ENCODE measurements at regions of chr4 and their contacts with region 1.

Region 1: DNA sequence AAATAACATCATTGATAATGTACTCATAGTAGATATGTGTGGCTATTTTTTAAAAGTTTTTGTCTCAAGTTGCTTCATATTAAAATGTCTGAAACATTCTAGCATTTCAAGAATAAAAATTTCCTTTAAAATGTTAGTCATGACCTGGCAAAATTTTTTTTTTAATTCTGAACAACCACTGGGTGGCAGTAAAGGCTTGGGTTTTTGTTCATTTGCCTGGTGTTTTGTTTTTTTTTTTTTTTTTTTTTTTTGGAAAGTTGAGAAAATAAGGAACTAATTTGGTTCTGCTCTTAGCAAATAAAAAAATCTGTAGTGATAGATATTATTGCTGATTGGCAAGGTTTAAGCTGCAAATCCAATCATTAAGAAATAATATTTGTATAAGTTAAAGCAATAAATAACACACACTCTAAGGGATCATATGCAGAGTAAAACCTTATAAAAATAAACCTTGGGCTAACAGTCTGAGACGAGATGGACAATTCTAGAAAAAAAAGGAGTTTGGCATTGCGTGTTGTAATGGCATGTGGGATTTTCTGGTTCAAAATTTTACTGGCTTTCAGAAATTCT is 81.4 kb downstream of the CEP44 start:
- DNase-seq: no peak
- ATAC-seq: no peak
- H3K4me3 ChIP-seq: no peak overlapping the region
- H3K27ac ChIP-seq: no peak overlapping the region
- H3K4me1 ChIP-seq: no peaks in the 10 kb centered on the region
- H3K27me3 ChIP-seq: no peaks in the 10 kb centered on the region
- CTCF ChIP-seq: peak; percentile 54

Region 2: GRCh38 chr4:174340714-174341113 is 24.4 kb before region 1 on chr4:
- intact Hi-C with region 1: no loop called
- DNase-seq: no peak
- ATAC-seq: no peak
- H3K4me3 ChIP-seq: no peak overlapping the region
- H3K27ac ChIP-seq: no peak overlapping the region
- H3K4me1 ChIP-seq: no peaks in the 10 kb centered on the region
- H3K27me3 ChIP-seq: no peaks in the 10 kb centered on the region
- CTCF ChIP-seq: no peak

Region 3: DNA sequence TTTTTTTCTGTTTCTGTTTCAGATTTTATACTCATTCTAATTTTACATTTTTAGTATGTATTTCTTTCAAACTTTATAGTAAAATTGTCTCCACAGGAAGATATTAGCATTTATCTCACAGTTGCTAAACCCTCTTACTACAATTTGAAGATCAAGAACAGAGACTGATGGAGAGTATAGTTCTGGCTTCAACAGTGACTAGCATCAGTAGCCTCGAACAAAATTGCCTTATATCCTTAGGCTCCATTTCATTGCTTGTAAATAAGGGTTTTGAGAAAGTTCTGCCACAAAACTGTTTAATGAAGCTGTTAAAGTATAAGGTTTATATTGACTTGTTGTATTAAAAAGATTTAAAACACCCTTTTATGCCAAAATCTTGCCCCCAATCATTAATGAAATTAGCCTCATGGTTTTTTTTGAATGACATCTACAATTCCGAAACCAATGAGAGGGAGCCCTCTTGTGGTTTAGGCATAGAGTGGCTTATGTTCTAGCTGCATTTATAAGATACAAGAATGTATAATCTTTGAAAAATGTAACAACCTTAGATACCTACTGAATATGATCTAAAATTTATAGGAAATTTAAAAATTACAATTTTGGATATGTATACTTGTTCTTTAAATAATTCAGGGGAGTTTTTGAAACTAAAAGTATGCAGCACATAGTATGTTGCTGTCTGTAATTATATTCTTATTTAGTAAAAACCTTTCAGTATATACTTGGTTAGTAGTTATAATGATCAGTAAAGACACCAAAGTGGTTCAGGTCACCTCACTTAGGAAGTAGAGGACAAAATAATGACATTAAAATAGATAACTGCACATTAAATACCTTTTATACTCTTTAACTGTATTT is 267.0 kb after region 1 on chr4:
- intact Hi-C with region 1: loop called (anchors 2 kb)
- DNase-seq: no peak
- ATAC-seq: peak in 1 of 4 donors; percentile 74
- H3K4me3 ChIP-seq: no peak overlapping the region
- H3K27ac ChIP-seq: no peak overlapping the region
- H3K4me1 ChIP-seq: no peaks in the 10 kb centered on the region
- H3K27me3 ChIP-seq: no peaks in the 10 kb centered on the region
- CTCF ChIP-seq: peak; percentile 69

Region 4: DNA sequence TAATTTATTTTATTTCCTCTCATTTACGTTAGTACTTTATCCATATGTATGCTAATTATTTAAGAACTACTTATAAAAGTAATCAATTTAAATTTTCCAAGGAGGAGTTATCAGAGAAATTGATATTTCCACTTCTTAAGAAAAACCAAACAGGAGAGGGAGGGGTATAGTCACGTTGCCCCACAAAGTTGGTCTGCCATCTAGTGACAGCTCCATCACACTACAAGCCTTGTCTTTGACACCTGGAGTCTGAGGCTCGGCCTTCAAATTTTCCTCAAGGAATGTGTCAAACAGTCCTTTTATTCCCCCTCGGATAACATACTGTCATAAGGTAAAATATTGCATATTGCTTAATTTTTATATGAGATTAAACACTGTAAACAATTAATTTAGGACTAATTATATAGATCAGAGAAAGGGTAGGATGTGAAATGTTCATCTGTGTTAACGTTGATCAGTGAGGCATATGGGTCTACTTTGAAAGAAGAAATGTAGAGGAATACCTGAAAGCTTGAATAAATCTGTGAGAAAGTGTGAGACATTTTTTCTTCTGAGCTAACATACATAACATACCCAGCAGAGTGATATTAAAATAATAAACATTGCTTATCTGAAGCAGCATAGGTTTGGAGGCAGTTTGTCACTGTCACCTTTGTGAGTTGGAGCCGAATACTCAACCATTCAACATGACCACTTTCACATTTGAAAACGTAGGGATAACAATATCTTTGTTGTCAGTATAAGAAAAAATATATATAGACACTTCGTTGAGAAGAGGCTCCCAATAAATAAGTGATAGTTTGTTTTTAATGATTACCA is 349.5 kb after region 1 on chr4:
- intact Hi-C with region 1: loop called (anchors 5 to 10 kb)
- DNase-seq: no peak
- ATAC-seq: peak in 1 of 4 donors; percentile 54
- H3K4me3 ChIP-seq: no peak overlapping the region
- H3K27ac ChIP-seq: no peak overlapping the region
- H3K4me1 ChIP-seq: no peaks in the 10 kb centered on the region
- H3K27me3 ChIP-seq: no peaks in the 10 kb centered on the region
- CTCF ChIP-seq: peak; percentile 52